A673 (cell line): ENCODE measurements at regions of chr15 and their contacts with region 1.

Region 1: DNA sequence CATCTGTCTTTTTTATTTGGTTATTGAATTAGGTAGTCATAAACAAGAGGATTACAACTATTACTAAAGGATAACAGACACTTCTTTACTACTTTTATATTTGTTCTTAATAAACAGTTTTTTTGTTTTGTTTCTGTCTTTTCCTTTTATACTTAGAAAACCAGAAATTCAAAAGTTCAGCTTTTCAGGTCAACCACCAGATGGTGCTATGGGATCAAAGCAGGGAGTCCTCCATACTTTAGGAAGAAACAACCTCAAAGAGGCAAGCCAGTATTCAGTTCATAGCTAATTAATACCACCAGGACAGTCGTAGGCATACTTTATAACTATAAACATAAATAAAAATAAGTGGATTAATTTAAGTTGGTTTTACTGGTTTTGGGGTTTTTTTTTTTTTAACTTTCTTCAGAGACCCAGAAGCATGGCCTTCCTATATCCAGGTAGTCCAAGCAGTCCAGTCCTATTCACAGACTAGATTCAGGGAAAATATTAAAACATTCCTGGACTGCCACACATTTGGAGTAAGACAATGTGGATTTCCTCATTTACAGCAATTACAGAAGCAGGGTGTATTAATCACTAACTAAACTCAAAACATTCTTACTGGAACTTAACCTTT is 16.0 kb upstream of the EID1 start:
- DNase-seq: peak; percentile 77
- H3K4me3 ChIP-seq: no peak overlapping the region
- H3K27ac ChIP-seq: no peak overlapping the region
- H3K4me1 ChIP-seq: peaks cover 26% of the 10 kb centered on the region
- H3K27me3 ChIP-seq: no peaks in the 10 kb centered on the region
- CTCF ChIP-seq: peak; percentile 92

Region 2: DNA sequence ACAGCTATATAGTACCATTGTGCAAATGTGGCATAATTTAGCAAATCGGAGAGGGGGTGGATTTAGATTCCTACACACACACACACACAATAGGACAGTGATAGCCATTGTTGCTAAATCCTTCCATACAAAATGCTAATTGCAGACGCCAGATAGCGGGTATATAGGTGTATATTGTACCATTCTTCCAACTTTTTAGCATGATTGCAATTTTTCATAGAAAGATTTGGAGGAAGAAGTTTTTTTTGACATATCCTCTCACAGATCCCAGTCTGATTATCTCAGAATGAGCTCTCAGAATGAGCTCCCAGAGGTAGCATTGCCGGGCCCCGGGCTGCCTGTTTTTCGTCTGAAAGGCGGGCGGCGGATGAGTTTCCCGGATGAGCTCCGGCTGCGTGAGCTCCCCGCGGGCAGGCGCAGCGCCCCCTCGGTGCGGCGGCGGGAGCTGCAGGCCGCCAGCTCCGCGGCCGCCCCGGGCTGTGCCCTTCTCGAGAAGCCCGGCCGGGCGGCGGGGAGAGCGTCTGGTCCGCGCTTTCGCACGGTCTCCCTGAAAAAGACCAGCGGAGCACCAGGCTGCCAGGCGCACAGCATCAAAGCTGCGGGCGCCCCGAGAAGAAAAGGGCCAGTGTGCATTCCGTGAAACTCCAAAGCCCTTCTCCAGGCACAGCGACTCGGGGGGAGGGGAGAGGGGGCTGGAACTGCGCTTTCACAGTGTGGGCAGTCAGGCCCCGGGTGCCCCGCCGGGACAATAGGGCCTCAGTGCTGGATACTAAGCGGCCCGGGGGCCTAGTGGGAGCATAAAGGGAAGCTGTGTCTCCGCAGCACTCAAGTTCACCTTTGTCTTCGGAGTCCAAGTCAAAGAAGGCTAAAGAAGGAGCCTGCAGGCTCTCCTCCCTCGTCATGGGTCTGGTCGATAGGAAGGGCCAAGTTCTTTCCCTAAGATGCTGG is 113.8 kb after region 1 on chr15:
- CTCF ChIA-PET with region 1: interaction called, 21 read pairs
- POLR2A ChIA-PET with region 1: no interaction called
- intact Hi-C with region 1: no loop called
- DNase-seq: peak; percentile 92
- H3K4me3 ChIP-seq: peak overlapping the region; percentile 44
- H3K27ac ChIP-seq: peak overlapping the region; percentile 55
- H3K4me1 ChIP-seq: peaks cover 7% of the 10 kb centered on the region
- H3K27me3 ChIP-seq: no peaks in the 10 kb centered on the region
- CTCF ChIP-seq: peak; percentile 73

Region 3: GRCh38 chr15:49145651-49146609 is 284.0 kb after region 1 on chr15:
- CTCF ChIA-PET with region 1: interaction called, 25 read pairs
- POLR2A ChIA-PET with region 1: no interaction called
- intact Hi-C with region 1: loop called (anchors 1 kb)
- DNase-seq: peak; percentile 71
- H3K4me3 ChIP-seq: no peak overlapping the region
- H3K27ac ChIP-seq: no peak overlapping the region
- H3K4me1 ChIP-seq: peaks cover 31% of the 10 kb centered on the region
- H3K27me3 ChIP-seq: no peaks in the 10 kb centered on the region
- CTCF ChIP-seq: peak; percentile 90

Region 4: DNA sequence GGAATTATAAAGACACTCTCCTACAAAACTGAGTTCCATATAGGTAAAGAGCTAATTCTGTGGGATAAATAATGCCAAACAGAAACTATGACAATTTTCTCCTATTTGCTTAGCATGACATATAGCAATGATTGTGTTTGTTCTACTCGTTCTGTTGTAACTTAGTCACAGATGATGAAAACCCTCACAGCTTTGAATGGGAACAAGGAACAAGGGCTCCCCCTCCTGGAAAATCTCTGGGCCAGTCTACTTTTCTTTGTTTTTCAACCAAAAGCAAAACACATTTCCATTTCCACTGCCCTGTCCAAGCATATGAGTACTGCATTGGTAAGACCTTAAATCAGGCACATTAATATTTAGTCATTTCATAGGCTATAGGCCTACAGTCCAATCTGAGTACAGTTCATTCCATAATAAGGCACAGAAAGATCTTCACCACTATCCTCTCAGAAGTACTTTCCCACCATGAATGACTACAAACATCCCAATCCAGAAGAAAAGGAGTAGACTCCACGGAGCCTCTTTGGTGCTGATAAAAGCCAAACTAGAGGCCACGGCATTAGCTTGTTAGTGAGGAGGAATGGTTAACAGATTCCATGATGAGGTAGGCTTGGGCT is 1190.0 kb after region 1 on chr15:
- CTCF ChIA-PET with region 1: no interaction called
- POLR2A ChIA-PET with region 1: no interaction called
- intact Hi-C with region 1: loop called (anchors 5 kb)
- DNase-seq: peak; percentile 66
- H3K4me3 ChIP-seq: no peak overlapping the region
- H3K27ac ChIP-seq: no peak overlapping the region
- H3K4me1 ChIP-seq: no peaks in the 10 kb centered on the region
- H3K27me3 ChIP-seq: no peaks in the 10 kb centered on the region
- CTCF ChIP-seq: peak; percentile 72